CD8-positive, alpha-beta T cell (primary cell): ENCODE measurements at regions of chr10 and their contacts with region 1.

Region 1: GRCh38 chr10:67988606-67989005 is 86.5 kb downstream of the HERC4 start:
- DNase-seq: no peak
- ATAC-seq: no peak
- H3K4me3 ChIP-seq: no peak overlapping the region
- H3K4me3 Mint-ChIP-seq: no peak overlapping the region
- H3K27ac ChIP-seq: no peak overlapping the region
- H3K27ac Mint-ChIP-seq: no peak overlapping the region
- H3K4me1 ChIP-seq: no peaks in the 10 kb centered on the region
- H3K4me1 Mint-ChIP-seq: peaks cover 6% of the 10 kb centered on the region
- H3K27me3 ChIP-seq: no peaks in the 10 kb centered on the region
- H3K27me3 Mint-ChIP-seq: no peaks in the 10 kb centered on the region
- CTCF ChIP-seq: no peak

Region 2: GRCh38 chr10:68023292-68023691 is 34.7 kb after region 1 on chr10:
- CTCF ChIA-PET with region 1: no interaction called
- POLR2A ChIA-PET with region 1: no interaction called
- intact Hi-C with region 1: loop called in 1 of 2 experiments (anchors 5 kb)
- DNase-seq: no peak
- ATAC-seq: no peak
- H3K4me3 ChIP-seq: no peak overlapping the region
- H3K4me3 Mint-ChIP-seq: no peak overlapping the region
- H3K27ac ChIP-seq: no peak overlapping the region
- H3K27ac Mint-ChIP-seq: peak overlapping the region; percentile 3
- H3K4me1 ChIP-seq: no peaks in the 10 kb centered on the region
- H3K4me1 Mint-ChIP-seq: peaks cover 8% of the 10 kb centered on the region
- H3K27me3 ChIP-seq: no peaks in the 10 kb centered on the region
- H3K27me3 Mint-ChIP-seq: no peaks in the 10 kb centered on the region
- CTCF ChIP-seq: no peak